ENCODE measurements at regions of chr2 and their contacts with region 1.

Region 1: DNA sequence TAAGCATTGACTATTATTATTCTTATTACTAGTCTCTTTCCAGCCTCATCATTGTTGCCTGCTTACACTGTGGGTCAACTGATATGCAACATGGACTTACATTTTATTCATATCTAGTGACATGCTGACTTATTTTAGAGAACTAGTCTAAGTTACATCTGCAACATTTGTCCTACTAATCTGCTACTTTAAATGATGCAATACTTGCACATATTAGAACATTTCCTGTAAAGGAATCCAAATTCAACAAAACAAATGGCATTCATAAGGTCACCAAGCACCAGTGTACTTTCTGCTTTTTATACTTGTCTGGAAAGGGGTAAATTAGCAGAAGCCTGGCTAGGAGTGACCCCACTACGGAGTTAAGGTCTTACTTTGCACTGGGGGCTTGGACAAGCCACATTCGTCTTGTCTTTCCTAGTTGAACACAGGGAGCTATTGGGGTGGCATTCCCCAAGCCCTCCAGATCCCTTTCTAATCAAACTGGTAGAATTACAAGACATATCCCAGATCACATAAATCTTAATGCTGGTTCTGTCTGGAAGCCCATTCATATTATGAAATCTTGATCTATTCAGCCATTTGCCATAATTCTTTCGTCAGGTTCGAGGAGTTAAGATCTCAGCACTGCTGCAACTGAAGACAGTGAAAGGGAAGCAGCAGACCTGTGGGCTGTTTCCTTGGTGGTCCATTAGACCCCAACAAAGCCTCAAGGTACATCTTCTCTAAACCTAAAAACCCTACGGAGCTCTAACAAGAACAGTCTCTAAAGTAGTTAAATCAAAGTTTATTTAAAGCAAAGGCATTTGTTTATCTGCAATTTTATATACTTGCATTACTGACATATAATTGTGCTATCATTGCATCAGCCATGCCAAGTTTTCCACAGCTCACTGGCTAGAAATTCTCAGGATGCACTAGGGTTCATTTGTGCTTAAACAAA is 49.9 kb upstream of the RTN4 start:
- DNase-seq: no peak
- ATAC-seq: peak; percentile 83
- H3K4me3 ChIP-seq: peak overlapping the region in 1 of 2 donors; percentile 24
- H3K27ac ChIP-seq: peak overlapping the region; percentile 99
- H3K4me1 ChIP-seq: peaks cover 5 to 6% of the 10 kb centered on the region in 2 donors
- H3K27me3 ChIP-seq: no peaks in the 10 kb centered on the region

Region 2: DNA sequence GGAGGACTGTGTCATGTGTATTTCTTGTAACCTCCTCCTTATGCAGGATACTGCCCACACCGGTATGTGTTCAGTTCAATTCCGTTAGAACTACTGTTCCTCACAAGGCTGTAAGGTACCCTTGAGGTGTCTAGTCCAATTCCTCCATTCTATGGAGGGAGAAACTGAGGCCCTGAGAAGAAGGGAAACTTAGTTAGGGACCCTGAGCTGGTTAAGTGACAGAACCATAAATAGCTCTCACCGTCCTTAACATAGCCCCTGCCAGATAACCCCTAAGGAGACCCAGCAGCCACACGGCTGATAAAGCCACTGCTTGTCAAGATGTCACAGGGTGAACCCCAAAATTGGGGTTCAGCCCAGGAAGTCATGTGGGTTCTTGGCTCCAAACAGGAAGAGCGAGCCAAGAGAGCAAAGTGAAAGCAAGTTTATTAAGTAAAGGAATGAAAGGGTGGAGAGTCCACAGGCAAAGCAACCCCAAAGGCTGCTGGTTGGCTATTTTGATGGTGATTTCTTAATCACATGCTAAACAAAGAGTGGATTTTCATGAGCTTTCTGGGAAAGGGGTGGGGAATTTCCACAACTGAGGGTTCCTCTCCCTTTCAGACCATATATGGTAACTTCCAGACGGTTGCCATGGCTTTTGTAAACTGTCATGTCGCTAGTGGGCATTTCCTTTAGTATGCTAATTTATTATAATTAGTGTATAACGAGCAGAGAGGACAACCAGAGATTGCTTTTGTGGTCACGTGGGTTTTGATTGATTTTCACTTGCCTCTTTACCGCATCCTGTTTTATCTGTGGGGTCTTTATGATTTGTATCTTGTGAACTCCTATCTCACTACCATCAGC is 33.5 kb after region 1 on chr2:
- intact Hi-C with region 1: loop called in 1 of 2 experiments (anchors 2 kb)
- DNase-seq: peak in 1 of 2 donors; percentile 54
- ATAC-seq: peak; percentile 74
- H3K4me3 ChIP-seq: peak overlapping the region; percentile 57 to 81
- H3K27ac ChIP-seq: peak overlapping the region; percentile 64 to 67
- H3K4me1 ChIP-seq: peaks cover 0 to 4% of the 10 kb centered on the region in 2 donors
- H3K27me3 ChIP-seq: no peaks in the 10 kb centered on the region

Region 3: DNA sequence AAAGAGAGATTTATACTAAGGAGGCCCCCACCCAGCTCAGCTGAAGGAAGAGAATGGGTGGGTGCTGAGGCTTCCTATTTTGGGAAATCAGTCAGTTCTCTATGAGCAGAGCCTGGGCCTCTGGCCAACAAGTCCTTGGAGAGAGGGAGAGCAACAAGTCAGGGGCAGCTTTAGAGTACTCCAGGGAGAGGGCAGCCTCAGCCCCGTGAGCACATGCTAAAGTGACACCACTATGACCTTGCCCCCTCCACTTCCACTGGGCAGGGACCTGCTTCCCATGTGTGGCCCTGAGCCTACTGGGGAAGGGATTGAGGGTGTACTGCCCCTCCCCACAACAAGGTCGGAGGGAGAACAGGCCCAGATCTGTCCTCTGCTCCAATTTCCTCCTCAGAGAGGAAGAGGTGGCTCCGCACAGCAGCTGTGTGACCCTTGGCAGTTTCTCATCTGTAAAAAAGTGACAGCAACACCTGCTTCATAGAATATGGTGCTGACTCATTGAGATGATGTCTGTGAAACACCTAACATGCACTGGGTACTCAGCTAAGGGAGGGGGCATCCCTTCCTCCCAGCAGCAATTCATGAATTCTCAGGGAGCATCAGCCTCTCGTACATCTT is 59.0 kb after region 1 on chr2:
- intact Hi-C with region 1: loop called in 1 of 2 experiments (anchors 5 kb)
- DNase-seq: peak in 1 of 2 donors; percentile 78
- ATAC-seq: peak; percentile 53
- H3K4me3 ChIP-seq: no peak overlapping the region
- H3K27ac ChIP-seq: no peak overlapping the region
- H3K4me1 ChIP-seq: peaks cover 10 to 12% of the 10 kb centered on the region in 2 donors
- H3K27me3 ChIP-seq: no peaks in the 10 kb centered on the region